Caco-2 (cell line): ENCODE measurements at regions of chr9 and their contacts with region 1.

Region 1: DNA sequence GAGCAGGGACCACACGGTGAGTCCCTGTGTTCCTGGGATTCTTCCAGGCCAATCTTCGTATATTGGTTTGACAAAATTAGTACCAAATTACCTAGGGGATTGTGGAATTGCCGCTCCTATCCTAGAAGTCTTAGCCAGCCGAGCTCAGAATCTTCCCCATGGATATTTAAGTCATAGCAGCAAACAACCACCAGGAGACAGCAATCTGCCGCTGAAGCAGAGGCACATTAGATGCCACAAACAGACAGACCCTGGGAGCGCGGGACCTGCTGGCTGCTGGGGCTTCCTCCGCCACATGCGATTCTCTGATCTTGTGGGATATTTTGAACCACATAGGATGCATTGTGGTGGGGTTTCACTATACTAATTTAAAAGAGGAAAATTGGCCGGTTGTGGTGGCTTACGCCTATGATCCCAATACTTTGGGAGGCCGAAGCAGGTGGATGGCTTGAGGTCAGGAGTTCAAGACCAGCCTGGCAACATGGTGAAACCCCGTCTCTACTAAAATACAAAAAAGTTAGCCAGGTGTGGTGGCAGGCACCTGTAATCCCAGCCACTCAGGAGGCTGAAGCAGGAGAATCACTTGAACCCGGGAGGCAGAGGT is 31.7 kb upstream of the ZBTB43 start:
- DNase-seq: peak; percentile 42 to 45
- H3K4me3 ChIP-seq: no peak overlapping the region
- H3K4me3 Mint-ChIP-seq: no peak overlapping the region
- H3K27ac Mint-ChIP-seq: no peak overlapping the region
- H3K4me1 ChIP-seq: no peaks in the 10 kb centered on the region
- H3K4me1 Mint-ChIP-seq: no peaks in the 10 kb centered on the region
- H3K27me3 ChIP-seq: no peaks in the 10 kb centered on the region
- H3K27me3 Mint-ChIP-seq: peaks cover 8% of the 10 kb centered on the region
- CTCF ChIP-seq: peak; percentile 71 to 74

Region 2: DNA sequence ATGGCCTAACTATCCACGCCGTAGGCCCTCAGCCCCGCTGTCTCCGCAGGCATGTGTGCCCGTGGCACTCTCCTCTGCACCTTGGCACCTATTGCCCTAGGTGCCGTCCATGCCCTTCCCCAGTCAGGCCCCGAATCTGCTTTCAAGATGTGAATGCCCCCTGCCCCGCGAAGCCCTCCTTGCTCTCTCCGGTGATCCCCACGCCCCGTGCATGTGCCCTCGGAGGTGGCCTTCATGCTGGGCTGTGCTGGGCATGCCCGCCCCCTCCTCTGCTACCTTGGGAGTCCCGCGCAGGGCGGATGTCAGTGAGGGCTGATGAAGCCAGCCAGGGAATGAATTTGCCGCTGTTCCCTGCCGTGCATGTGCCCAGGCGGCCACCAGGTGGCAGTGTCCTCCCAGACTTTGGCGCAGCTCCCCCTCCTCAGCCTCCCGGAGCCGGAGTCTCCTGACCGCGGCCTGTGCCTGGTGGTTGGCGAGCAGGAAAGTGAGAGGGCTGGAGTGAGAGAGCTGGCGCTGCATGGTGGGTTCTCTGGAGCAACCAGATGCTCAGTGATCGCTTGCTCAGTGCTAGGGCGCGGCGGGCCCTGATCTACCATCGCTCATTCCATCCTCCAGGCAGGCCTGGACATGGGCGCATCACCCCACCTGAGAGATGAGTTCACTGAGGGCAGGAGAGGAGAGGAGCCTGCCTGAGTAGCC is 272.3 kb before region 1 on chr9:
- CTCF ChIA-PET with region 1: no interaction called
- POLR2A ChIA-PET with region 1: no interaction called
- intact Hi-C with region 1: loop called (anchors 10 kb)
- DNase-seq: peak; percentile 69 to 76
- H3K4me3 ChIP-seq: no peak overlapping the region
- H3K4me3 Mint-ChIP-seq: no peak overlapping the region
- H3K27ac Mint-ChIP-seq: no peak overlapping the region
- H3K4me1 ChIP-seq: peaks cover 8% of the 10 kb centered on the region
- H3K4me1 Mint-ChIP-seq: no peaks in the 10 kb centered on the region
- H3K27me3 ChIP-seq: no peaks in the 10 kb centered on the region
- H3K27me3 Mint-ChIP-seq: no peaks in the 10 kb centered on the region
- CTCF ChIP-seq: peak; percentile 85 to 93

Region 3: GRCh38 chr9:126985870-126986498 is 212.9 kb after region 1 on chr9:
- CTCF ChIA-PET with region 1: no interaction called
- POLR2A ChIA-PET with region 1: no interaction called
- intact Hi-C with region 1: no loop called
- DNase-seq: no peak
- H3K4me3 ChIP-seq: no peak overlapping the region
- H3K4me3 Mint-ChIP-seq: no peak overlapping the region
- H3K27ac Mint-ChIP-seq: no peak overlapping the region
- H3K4me1 ChIP-seq: peaks cover 23% of the 10 kb centered on the region
- H3K4me1 Mint-ChIP-seq: peaks cover 8% of the 10 kb centered on the region
- H3K27me3 ChIP-seq: no peaks in the 10 kb centered on the region
- H3K27me3 Mint-ChIP-seq: no peaks in the 10 kb centered on the region
- CTCF ChIP-seq: no peak